ENCODE measurements at regions of chr13 and their contacts with region 1.

Region 1: GRCh38 chr13:49443704-49444523 is at the starts of genes CAB39L and SETDB2:
- DNase-seq: peak; percentile 100
- H3K4me3 ChIP-seq: peak within 1 kb of the TSS; percentile 66 to 88 (median 80)
- H3K27ac ChIP-seq: peak within 1 kb of the TSS; percentile 92 to 97 (median 94)
- H3K4me1 ChIP-seq: peaks cover 0 to 46% (median 41%) of the 10 kb centered on the region in 4 donors
- H3K27me3 ChIP-seq: no peaks in the 10 kb centered on the region
- CTCF ChIP-seq: peak in 2 of 4 experiments; percentile 33 to 36
- EP300 ChIP-seq: peak in 1 of 4 donors; percentile 11
- POLR2A ChIP-seq: peak; percentile 64 to 78
- total RNA-seq, gene CAB39L: 121 to 180 (median 150) TPM
- total RNA-seq, gene SETDB2: 7.5 to 12.5 (median 11.2) TPM

Region 2: GRCh38 chr13:48975856-48976575 is 467.9 kb before region 1 on chr13 and contains the start of gene FNDC3A:
- intact Hi-C with region 1: loop called (anchors 2 kb)
- DNase-seq: peak; percentile 90
- H3K4me3 ChIP-seq: peak within 1 kb of the TSS; percentile 80 to 95 (median 92)
- H3K27ac ChIP-seq: peak within 1 kb of the TSS; percentile 99 to 100 (median 99)
- H3K4me1 ChIP-seq: peaks cover 0 to 45% (median 38%) of the 10 kb centered on the region in 4 donors
- H3K27me3 ChIP-seq: no peaks in the 10 kb centered on the region
- CTCF ChIP-seq: no peak
- EP300 ChIP-seq: no peak
- POLR2A ChIP-seq: no peak
- total RNA-seq, gene FNDC3A: 47.8 to 61.4 (median 54.3) TPM

Region 3: DNA sequence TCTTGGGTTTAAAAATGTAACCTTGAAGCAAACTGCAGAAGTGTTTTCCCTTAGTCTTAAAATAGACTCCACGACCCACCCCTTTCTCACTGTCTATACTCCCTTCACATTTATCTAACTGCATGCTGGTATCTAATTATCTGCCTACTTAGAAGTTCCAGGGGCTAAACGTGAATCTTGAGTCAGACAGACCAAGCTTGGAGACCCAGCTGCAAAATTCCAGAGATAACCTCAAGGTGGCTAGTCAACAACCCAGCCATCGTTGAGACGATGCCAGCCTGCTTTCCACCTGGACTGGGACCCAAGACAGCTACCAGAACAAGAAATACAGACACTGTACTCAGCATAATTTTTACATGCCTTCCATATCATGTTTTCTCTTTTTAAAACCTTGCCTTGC is 114.1 kb before region 1 on chr13:
- intact Hi-C with region 1: no loop called
- DNase-seq: no peak
- H3K4me3 ChIP-seq: no peak overlapping the region
- H3K27ac ChIP-seq: no peak overlapping the region
- H3K4me1 ChIP-seq: no peaks in the 10 kb centered on the region
- H3K27me3 ChIP-seq: no peaks in the 10 kb centered on the region
- CTCF ChIP-seq: no peak
- EP300 ChIP-seq: no peak
- POLR2A ChIP-seq: no peak

Region 4: GRCh38 chr13:49400755-49401659 is 42.9 kb before region 1 on chr13:
- intact Hi-C with region 1: loop called (anchors 2 kb)
- DNase-seq: peak; percentile 80
- H3K4me3 ChIP-seq: peak overlapping the region; percentile 42 to 56 (median 52)
- H3K27ac ChIP-seq: peak overlapping the region; percentile 72 to 89 (median 86)
- H3K4me1 ChIP-seq: peaks cover 0 to 41% (median 26%) of the 10 kb centered on the region in 4 donors
- H3K27me3 ChIP-seq: no peaks in the 10 kb centered on the region
- CTCF ChIP-seq: no peak
- EP300 ChIP-seq: peak; percentile 43 to 76 (median 72)
- POLR2A ChIP-seq: peak in 1 of 2 donors; percentile 57

Region 5: DNA sequence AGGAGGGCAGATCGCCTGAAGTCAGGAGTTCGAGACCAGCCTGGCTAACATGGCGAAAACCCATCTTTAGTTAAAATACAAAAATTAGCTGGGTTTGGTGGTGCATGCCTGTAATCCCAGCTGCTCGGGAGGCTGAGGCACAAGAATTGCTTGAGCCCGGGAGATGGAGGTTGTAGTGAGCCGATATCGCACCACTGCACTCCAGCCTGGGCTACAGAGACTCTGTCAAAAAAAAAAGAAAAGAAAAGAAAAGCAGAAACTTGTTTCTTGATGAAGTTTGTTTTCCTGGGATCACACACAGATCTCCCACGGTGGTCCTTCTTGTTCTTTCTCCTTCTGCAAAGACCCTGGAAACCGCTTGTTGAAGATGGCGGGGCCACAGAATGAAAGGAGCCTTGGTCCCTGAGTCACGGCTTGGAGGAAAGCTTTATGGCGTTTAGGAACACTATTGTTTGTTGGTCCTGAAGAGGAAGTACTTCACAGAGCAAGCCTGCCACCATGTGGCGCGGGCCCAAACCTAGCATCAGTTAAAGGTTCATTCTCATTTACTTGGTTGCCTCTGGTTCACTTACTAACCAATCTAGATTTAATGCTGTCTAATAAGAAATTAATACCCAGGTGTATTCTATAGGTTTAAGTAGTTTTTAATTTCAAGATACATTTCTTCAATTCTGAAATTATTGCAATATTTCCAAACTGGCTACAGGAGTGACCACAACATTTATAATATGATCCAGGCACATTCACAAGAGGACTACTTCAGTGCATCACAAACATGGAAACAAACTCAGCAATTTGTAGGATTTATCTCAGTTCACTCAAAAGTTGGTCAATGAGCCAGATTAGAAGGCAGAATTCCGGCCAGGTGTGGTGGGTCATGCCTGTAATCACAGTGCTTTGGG is 163.1 kb after region 1 on chr13:
- intact Hi-C with region 1: loop called (anchors 5 kb)
- DNase-seq: peak; percentile 93
- H3K4me3 ChIP-seq: peak overlapping the region in 3 of 4 donors; percentile 22 to 39 (median 35)
- H3K27ac ChIP-seq: peak overlapping the region in 1 of 4 donors; percentile 32
- H3K4me1 ChIP-seq: no peaks in the 10 kb centered on the region
- H3K27me3 ChIP-seq: no peaks in the 10 kb centered on the region
- CTCF ChIP-seq: peak; percentile 14 to 73 (median 57)
- EP300 ChIP-seq: no peak
- POLR2A ChIP-seq: no peak

Measured in sigmoid colon (tissue), 7 donors.